ENCODE measurements at regions of chr10 and their contacts with region 1.

Region 1: GRCh38 chr10:29328983-29329382 is 40.1 kb downstream of the LYZL1 start:
- DNase-seq: no peak

Region 2: DNA sequence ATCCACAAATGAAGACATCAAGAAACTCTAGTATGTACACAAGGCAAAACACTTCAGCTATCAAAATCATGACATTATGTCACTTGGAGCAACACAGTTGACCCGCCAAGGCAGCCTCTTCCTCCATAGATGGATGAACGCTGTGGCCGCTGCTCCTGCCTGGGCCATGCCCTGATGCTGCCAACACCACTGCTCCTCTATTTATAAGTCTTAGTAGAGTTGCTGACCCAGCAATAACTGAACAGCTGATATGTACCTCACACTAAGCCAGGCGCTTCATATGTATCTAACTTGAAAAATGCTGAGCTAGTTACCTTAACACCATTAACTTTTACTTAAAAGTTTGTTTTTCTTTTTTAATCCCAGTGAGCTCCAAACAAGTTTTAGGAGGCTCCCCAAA is 91.8 kb after region 1 on chr10:
- intact Hi-C with region 1: no loop called
- DNase-seq: no peak

Region 3: DNA sequence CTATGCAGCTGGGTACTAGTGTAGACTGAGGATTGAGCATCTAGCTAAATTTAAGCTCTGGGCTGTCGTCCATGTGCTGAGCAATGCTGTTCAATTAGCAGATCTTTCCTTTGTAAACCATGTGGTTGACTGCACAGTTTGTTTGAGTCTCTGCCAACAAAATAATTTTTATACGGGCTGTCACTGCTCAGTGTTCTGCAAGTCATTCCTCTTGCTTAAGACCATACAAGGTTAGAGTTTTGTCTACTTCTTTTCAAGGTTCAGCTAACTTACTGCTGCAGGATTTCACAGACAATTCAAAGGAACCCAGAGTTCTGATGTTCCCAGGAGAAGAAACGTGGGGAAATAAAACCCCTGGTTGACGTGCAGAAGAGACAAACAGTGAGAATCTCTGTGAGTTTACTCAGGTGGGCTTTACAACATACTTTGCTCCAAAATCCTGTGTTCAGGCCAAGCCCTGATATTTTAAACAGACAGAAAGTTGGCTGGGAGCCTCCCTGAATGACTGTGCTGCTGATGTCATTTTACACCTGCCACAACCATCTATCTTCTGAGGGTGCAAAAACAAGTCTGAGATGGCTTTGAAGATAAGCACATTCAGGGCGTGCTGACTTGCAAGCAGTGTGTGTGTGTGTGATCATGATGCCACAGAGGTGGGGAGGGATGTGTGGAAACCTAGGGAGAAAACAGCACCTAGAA is 482.9 kb after region 1 on chr10:
- intact Hi-C with region 1: loop called (anchors 10 kb)
- DNase-seq: no peak

Measured in cardiac septum (tissue), 1 donor.